ENCODE measurements at regions of chr1 and their contacts with region 1.

Region 1: GRCh38 chr1:240149484-240150094 is 57.9 kb downstream of the FMN2 start:
- H3K4me3 ChIP-seq: no peak overlapping the region
- H3K27ac ChIP-seq: no peak overlapping the region
- H3K4me1 ChIP-seq: no peaks in the 10 kb centered on the region
- CTCF ChIP-seq: no peak

Region 2: DNA sequence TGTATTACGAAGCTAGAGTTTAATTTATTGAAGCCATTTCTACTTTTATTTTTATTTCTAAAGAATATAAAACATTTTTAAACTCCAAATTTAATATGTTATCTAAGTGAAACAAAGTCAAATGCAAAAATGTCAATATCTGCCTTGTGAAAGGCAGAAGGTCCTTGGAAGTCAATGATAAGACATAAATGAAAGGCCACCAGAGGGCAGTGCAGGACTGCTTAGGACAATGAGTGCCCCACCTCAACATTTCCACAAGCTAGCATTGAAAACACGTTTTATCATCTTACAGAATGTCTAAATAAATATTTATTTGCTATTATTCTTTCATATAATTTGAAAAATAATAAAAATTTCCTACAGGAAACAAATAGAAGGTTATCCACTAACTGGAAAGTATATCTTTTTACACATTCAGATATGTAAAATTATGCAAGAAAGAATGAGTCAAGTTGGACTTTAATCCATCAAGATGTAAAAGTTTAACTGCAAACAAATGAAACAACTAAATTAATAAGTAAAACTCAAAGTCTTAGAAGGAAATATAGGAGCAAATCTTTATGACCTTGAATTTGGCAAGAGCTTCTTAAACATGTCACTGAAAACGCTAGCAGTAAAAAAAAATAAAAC is 198.0 kb before region 1 on chr1:
- CTCF ChIA-PET with region 1: interaction called, 17 read pairs
- POLR2A ChIA-PET with region 1: no interaction called
- H3K4me3 ChIP-seq: no peak overlapping the region
- H3K27ac ChIP-seq: no peak overlapping the region
- H3K4me1 ChIP-seq: no peaks in the 10 kb centered on the region
- CTCF ChIP-seq: peak; percentile 64

Region 3: DNA sequence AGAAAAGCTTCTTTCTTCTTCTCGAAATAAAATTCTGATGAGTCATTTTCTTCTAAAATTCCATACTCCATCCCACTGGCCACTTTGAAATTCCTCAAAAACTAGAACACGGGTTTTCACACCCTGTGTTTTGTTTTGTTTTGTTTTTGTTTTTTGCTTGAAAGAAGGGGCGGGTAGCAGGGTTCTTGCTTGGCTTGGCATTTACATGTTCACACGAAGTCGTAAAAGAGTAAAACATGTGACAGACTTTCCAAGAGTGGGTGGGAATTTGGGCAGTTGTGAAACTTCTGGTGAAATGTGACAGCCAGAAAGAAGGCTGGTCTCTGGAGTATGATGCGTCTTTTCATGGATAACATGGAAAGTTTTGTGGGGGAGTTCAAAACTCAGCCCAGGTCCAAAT is 105.0 kb before region 1 on chr1:
- CTCF ChIA-PET with region 1: interaction called, 10 read pairs
- POLR2A ChIA-PET with region 1: no interaction called
- H3K4me3 ChIP-seq: no peak overlapping the region
- H3K27ac ChIP-seq: no peak overlapping the region
- H3K4me1 ChIP-seq: no peaks in the 10 kb centered on the region
- CTCF ChIP-seq: no peak

Region 4: GRCh38 chr1:240092301-240093119 is 57.1 kb before region 1 on chr1:
- CTCF ChIA-PET with region 1: interaction called, 39 read pairs
- POLR2A ChIA-PET with region 1: no interaction called
- H3K4me3 ChIP-seq: peak overlapping the region; percentile 89
- H3K27ac ChIP-seq: peak overlapping the region; percentile 83; the same call in 1 of the 2 replicates
- H3K4me1 ChIP-seq: peaks cover 26% of the 10 kb centered on the region
- CTCF ChIP-seq: peak; percentile 77

Region 5: GRCh38 chr1:240122639-240123613 is 26.7 kb before region 1 on chr1:
- CTCF ChIA-PET with region 1: interaction called, 29 read pairs
- POLR2A ChIA-PET with region 1: no interaction called
- H3K4me3 ChIP-seq: no peak overlapping the region
- H3K27ac ChIP-seq: no peak overlapping the region
- H3K4me1 ChIP-seq: no peaks in the 10 kb centered on the region
- CTCF ChIP-seq: no peak

Region 6: GRCh38 chr1:240169188-240169587 is 19.6 kb after region 1 on chr1:
- CTCF ChIA-PET with region 1: interaction called, 56 read pairs
- POLR2A ChIA-PET with region 1: no interaction called
- H3K4me3 ChIP-seq: no peak overlapping the region
- H3K27ac ChIP-seq: no peak overlapping the region
- H3K4me1 ChIP-seq: peaks cover 5% of the 10 kb centered on the region; the same call in 1 of the 2 replicates
- CTCF ChIP-seq: peak; percentile 39; the same call in 1 of the 2 replicates